ENCODE measurements at regions of chr17 and their contacts with region 1.

Region 1: GRCh38 chr17:43360739-43361505 is 37.9 kb upstream of the ARL4D start:
- DNase-seq: peak; percentile 65 to 93 (median 90)
- H3K4me3 ChIP-seq: peak overlapping the region; percentile 27 to 81 (median 62)
- H3K27ac ChIP-seq: peak overlapping the region; percentile 79 to 100 (median 98)
- H3K27me3 ChIP-seq: no peaks in the 10 kb centered on the region
- CTCF ChIP-seq: peak in 11 of 56 donors; percentile 6 to 27 (median 13)

Region 2: GRCh38 chr17:43393944-43394482 is 33.1 kb after region 1 on chr17:
- intact Hi-C with region 1: loop called in 1 of 2 experiments (anchors 5 kb)
- DNase-seq: peak; percentile 80 to 96 (median 92)
- H3K4me3 ChIP-seq: peak overlapping the region in 48 of 59 donors; percentile 1 to 63 (median 37)
- H3K27ac ChIP-seq: peak overlapping the region in 55 of 59 donors; percentile 4 to 89 (median 75)
- H3K27me3 ChIP-seq: no peaks in the 10 kb centered on the region
- CTCF ChIP-seq: peak; percentile 93 to 99 (median 97)